Ascending aorta (tissue), 2 donors: ENCODE measurements at regions of chr6 and their contacts with region 1.

Region 1: DNA sequence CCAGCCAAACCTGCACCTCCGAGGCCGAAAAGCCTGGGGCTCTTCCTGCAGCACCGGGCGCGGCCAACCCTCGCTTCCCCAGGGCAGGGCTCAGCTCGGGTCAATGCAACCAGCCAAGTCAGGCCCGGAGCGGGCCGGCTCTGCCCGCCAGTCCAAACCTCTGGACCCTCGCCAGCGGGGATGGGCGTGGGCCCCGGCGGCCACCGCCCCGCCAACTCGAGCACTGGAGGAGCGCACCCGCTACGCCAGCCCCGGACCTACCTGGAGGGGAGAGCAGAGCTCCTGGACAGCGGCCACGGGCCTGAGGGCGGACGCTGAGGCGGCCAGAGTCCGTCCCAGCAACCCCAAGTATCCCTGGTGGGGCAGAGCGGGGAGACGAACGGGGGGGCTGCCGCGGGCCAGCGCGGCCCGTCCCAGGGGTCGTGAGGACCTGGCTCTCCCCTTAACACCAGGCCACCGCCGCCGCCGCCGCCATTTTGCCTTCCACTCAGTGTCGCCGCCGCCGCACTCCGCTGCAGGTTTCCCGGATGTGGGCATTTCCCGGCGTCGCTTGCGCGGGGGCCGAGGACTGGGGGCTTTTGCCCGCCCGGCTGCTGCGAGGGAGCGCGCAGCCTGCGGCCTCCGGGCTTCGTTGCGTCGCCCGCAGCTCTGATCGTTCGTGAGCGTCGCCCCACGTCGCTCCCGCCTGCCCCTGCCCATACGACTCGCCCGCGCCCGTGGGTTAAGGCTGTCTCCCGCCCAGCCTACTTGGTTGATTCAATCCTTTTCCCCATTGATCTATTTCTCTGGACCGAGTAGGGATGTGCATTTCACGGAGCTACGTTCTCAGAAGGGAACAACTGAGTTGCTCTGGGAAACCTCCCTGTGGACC is at the start of gene LATS1:
- DNase-seq: peak; percentile 57 to 93
- H3K4me3 ChIP-seq: peak within 1 kb of the TSS; percentile 97
- H3K27ac ChIP-seq: peak within 1 kb of the TSS; percentile 100
- H3K4me1 ChIP-seq: peaks cover 4 to 20% of the 10 kb centered on the region in 2 donors
- H3K27me3 ChIP-seq: no peaks in the 10 kb centered on the region
- CTCF ChIP-seq: no peak
- total RNA-seq, gene LATS1: 11.9 TPM

Region 2: DNA sequence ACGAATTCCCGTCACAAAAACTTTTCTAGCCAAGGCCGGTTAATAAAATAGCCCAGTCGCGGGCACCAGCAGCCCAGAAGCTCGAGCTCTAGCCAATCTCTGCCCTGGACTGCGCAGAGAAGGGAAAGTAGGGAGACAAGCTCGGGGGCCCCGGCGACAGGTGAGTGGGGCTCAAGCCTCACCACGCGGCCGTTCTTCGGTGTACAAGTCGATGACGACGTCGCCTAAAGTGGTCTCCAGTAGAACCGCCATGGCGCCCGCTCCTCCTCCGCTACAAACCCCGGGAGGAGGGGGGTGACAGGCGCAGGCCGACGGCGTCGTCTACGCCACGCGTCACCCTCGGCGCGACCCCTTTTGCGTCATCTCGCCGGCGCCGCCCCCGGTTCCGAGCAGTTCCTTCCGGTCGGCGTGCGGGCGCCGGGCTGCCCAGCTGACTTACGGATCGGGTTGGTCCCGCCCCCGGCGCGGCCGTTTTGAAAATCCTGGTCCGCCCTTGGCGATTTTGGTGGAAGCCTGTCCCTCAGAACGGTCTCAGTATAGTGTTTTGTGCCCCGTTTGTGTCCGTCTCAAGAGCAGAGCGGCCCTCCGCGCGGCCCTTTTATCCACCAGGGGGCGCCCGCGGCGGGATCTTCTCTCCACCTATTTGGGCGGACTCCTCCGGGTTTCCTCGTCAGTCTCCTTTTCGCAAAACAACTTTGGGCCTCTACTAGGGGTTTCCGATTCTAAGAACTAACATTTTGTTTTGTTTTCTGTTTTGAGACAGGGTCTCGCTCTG is 171.9 kb before region 1 on chr6 and contains the start of gene PPIL4:
- intact Hi-C with region 1: loop called (anchors 5 kb)
- DNase-seq: peak; percentile 87 to 98
- H3K4me3 ChIP-seq: peak within 1 kb of the TSS; percentile 72 to 84
- H3K27ac ChIP-seq: peak within 1 kb of the TSS; percentile 88 to 98
- H3K4me1 ChIP-seq: peaks cover 4 to 25% of the 10 kb centered on the region in 2 donors
- H3K27me3 ChIP-seq: no peaks in the 10 kb centered on the region
- CTCF ChIP-seq: peak; percentile 61 to 70 (median 70)
- total RNA-seq, gene PPIL4: 8.9 TPM

Region 3: DNA sequence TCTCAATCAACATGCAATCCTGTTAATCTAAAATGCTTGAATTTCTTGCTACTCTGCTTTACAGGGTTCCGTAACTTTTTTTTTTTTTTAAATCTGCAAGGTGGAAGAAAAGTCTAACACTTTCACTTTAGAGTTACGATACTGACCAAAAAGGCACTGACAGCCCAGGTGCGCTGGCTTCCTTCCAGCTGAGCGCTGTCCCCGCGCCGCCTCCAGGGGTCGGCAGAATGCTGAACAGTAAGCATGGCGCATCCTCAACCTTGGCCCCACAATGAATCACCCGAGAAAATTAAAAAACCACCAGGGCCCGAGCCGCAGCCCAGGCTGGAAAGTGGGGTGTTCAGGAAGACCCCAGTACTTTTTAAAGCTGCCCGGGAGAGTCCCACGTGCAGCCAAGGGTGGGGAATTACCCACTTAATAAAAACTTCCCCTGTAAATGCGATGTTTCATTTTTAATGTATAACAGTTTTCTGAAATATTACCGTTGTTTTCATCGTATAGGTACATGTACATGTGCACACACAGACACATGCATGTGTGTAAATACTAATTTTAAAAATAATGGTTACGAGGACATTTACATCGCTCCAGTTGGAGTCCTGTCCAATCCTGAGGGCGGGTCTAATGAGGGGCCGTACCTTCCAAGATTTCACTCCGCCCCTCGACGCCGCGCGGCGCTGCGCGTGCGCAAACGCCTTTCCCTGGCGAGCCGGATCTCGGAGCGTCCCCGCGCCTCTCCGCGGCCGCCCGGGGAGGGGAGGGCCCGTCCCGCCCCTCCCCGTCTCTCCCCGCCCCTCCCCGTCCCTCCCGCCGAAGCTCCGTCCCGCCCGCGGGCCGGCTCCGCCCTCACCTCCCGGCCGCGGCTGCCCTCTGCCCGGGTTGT is 152.1 kb before region 1 on chr6 and contains the start of gene GINM1:
- intact Hi-C with region 1: loop called (anchors 5 kb)
- DNase-seq: peak; percentile 70 to 96
- H3K4me3 ChIP-seq: peak within 1 kb of the TSS; percentile 81 to 100
- H3K27ac ChIP-seq: peak within 1 kb of the TSS; percentile 92 to 98
- H3K4me1 ChIP-seq: peaks cover 0 to 12% of the 10 kb centered on the region in 2 donors
- H3K27me3 ChIP-seq: no peaks in the 10 kb centered on the region
- CTCF ChIP-seq: peak; percentile 38 to 53 (median 43)
- total RNA-seq, gene GINM1: 36.4 TPM

Region 4: DNA sequence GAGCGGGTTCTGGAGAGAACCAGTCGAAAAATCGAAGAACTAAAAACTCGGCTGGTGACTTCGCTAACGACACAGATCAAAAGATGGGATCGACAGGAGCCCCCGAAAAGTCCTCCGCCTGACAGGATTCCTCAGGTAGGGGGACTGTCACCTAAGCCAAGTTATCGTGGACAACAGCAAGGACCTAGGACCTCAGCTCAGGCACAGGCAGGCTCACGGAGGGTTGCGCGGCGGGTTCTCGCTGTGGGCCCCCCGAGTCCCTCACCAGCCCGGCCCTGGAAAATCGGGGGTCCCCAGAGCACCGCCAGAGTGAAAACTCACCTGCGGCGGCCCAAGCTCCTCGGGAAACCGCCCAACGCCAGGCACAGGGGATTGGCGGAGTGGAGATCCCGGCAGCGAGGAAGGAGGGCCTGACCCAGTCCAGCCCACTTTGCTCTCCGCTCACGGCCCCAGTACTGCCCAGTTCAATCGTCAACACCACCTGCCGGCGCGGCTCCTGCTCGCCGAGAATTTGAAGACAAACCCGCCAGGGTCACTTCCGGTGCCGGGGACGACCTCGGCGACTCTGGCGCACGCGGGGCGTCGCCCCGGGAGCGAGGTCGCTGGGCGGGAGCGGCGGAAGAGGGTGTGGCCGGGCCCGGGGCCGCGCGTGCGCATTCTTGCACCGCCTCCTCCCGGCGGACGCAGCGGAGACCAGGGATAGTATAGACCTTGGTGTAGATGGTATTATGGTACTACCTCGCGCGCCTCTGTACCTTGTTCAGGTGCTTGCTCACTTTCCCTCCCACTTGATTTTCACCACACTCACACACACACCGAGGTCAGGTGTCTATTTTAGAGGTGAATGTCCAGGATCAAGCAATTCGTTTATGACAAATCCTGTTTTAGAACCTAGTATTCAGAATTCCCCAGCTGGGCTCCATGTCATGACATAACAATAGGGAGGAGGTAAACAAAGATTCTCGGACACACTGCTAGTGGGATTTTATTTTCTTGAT is 69.4 kb before region 1 on chr6 and contains the start of gene KATNA1:
- intact Hi-C with region 1: loop called (anchors 2 kb)
- DNase-seq: peak; percentile 14 to 90
- H3K4me3 ChIP-seq: peak within 1 kb of the TSS; percentile 78 to 92
- H3K27ac ChIP-seq: peak within 1 kb of the TSS; percentile 64 to 89
- H3K4me1 ChIP-seq: peaks cover 0 to 7% of the 10 kb centered on the region in 2 donors
- H3K27me3 ChIP-seq: no peaks in the 10 kb centered on the region
- CTCF ChIP-seq: no peak
- total RNA-seq, gene KATNA1: 0.64 TPM

Region 5: DNA sequence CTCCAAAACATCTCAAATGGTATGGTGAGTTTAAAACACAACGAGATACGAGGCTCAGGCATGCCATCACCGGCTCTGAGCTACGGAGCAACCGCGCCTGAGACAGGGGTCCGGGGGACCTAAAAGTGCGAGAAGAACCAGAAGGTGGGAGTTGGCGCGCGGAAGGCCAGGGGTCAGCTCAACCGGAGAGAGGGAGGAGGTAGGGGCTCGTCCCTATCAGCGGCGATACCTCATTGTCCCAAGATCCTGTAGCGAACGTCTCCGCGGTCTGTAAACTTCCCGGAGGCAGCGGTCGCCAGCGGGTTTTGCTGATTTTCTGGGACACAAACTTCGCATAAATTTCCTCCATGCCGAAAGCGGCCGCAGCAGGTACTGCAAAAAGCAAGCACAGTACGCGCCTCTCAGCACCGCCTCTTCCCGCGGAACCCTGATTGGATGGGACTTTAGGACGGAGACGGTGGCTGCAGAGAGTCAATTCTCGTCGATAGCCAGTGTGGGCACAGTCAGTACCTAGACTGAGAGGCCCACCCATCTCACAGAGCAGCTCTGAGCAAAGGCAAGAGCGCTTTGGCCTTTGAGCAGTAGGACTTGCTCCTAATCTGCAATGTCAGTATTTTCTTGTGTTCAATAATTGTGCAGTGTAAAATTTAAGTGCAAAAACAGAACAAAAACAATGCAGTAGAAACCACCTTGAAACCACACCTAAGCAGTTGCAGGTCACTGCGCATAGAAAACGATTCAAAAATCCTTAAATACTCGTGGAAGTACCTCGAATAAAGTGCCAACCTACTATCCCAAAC is 28.5 kb after region 1 on chr6 and contains the start of gene NUP43:
- intact Hi-C with region 1: loop called (anchors 1 kb)
- DNase-seq: peak; percentile 64 to 96
- H3K4me3 ChIP-seq: peak within 1 kb of the TSS; percentile 70 to 73
- H3K27ac ChIP-seq: peak within 1 kb of the TSS; percentile 69 to 74
- H3K4me1 ChIP-seq: peaks cover 0 to 15% of the 10 kb centered on the region in 2 donors
- H3K27me3 ChIP-seq: no peaks in the 10 kb centered on the region
- CTCF ChIP-seq: peak; percentile 48 to 57 (median 49)
- total RNA-seq, gene NUP43: 2.9 TPM